HCT116 (cell line): ENCODE measurements at regions of chr7 and their contacts with region 1.

Region 1: DNA sequence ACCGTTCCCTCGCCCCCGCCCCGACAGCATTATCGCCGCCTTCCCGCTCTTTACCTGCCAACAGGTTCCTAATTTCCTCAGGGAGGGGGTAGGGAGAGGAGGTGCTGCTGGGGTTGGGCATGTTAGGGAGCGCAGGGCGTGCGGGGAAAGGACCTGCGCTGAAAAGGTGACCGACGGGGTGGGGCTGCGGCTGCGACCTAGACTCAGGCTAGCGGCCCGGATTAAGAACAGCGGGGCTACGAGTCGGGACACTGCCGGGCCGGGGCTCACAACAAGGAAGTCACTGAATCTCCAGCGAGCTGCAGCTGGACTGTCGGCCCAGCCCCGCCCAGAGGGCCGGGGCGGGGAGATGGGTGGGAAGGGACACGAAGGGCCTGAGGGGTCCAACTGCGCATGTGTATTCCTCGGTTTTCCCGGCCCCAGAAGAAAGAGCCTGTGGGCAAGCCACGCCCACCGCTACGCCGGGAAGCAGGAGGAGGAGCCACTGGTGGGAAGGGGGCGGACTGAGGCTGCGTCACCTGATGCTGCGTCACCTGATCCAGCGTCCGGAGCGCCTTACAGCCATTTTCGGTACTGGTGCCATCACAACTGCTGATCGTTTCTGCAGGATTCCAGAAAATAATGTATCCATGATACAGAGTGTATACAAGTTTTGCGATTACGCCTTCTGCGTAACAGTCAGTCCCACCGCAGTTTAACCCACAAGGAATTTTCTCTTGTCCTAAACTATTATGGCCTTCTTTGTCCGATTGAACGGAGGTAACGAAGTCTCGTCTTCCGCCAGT is at the start of gene SKAP2:
- DNase-seq: peak; percentile 96
- ATAC-seq: peak; percentile 90
- H3K4me3 ChIP-seq: peak within 1 kb of the TSS; percentile 64 to 77
- H3K27ac ChIP-seq: peak within 1 kb of the TSS; percentile 67
- H3K4me1 ChIP-seq: peaks cover 5 to 45% of the 10 kb centered on the region in 2 experiments; a peak in 3 of 4 replicates
- H3K27me3 ChIP-seq: no peaks in the 10 kb centered on the region
- CTCF ChIP-seq: no peak
- POLR2A ChIP-seq: peak; percentile 76
- RAD21 ChIP-seq: no peak; the same call in 1 of the 2 replicates
- total RNA-seq, gene SKAP2: 30.7 TPM

Region 2: DNA sequence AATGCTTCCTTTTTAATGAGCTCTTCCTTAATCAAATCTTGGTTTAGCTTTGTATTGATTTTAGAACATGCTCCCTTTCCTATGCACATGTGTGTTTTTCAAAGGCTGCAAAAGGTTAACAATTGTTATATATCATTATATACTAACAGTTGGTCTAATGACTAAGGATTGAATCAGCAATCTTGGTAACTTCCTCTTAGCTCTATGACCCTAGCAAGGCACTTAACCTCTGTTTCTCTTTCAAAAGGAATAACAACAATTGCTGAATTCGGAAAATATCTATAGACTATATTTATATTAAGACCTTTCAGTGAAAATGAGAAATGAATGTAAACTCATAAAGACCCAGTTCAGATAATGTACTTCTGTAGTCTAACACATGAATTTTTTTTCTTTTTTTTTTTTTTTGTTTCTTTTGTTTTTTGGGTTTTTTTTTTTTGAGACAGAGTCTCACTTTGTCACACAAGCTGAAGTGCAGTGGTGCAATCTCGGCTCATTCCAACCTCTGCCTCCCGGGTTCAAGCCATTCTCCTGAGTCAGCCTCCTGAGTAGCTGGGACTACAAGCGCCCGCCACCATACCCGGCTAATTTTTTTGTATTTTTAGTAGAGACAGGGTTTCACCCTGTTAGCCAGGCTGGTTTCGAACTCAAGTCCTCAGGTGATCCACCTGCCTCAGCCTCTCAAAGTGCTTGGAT is 182.5 kb after region 1 on chr7:
- CTCF ChIA-PET with region 1: no interaction called
- POLR2A ChIA-PET with region 1: no interaction called
- RAD21 ChIA-PET with region 1: no interaction called
- intact Hi-C with region 1: loop called (anchors 5 kb)
- DNase-seq: peak; percentile 57
- ATAC-seq: peak; percentile 62
- H3K4me3 ChIP-seq: no peak overlapping the region; a peak in 1 of 4 replicates
- H3K27ac ChIP-seq: no peak overlapping the region; the same call in 1 of the 2 replicates
- H3K4me1 ChIP-seq: peaks cover 3 to 17% of the 10 kb centered on the region in 2 experiments; a peak in 3 of 4 replicates
- H3K27me3 ChIP-seq: no peaks in the 10 kb centered on the region
- CTCF ChIP-seq: no peak
- POLR2A ChIP-seq: no peak
- RAD21 ChIP-seq: no peak

Region 3: GRCh38 chr7:27137640-27138315 is 273.3 kb after region 1 on chr7:
- CTCF ChIA-PET with region 1: no interaction called
- POLR2A ChIA-PET with region 1: no interaction called
- RAD21 ChIA-PET with region 1: no interaction called
- intact Hi-C with region 1: no loop called
- DNase-seq: no peak
- ATAC-seq: no peak
- H3K4me3 ChIP-seq: no peak overlapping the region
- H3K27ac ChIP-seq: no peak overlapping the region
- H3K4me1 ChIP-seq: peaks cover 36 to 57% of the 10 kb centered on the region in 2 experiments
- H3K27me3 ChIP-seq: no peaks in the 10 kb centered on the region
- CTCF ChIP-seq: no peak
- POLR2A ChIP-seq: no peak
- RAD21 ChIP-seq: no peak